Activated naive CD4-positive, alpha-beta T cell treated with anti-CD3 and anti-CD28 coated beads for 36 hours (primary cell): ENCODE measurements at regions of chr10 and their contacts with region 1.

Region 1: GRCh38 chr10:8130973-8131911 is 76.8 kb downstream of the GATA3 start:
- DNase-seq: peak; percentile 61
- H3K4me3 Mint-ChIP-seq: no peak overlapping the region
- H3K27ac Mint-ChIP-seq: no peak overlapping the region
- H3K4me1 Mint-ChIP-seq: peaks cover 31% of the 10 kb centered on the region
- H3K27me3 Mint-ChIP-seq: peaks cover 6% of the 10 kb centered on the region

Region 2: GRCh38 chr10:8059959-8060703 is 71.1 kb before region 1 on chr10:
- CTCF ChIA-PET with region 1: no interaction called
- intact Hi-C with region 1: loop called (anchors 1 kb)
- DNase-seq: peak; percentile 75
- H3K4me3 Mint-ChIP-seq: peak overlapping the region; percentile 54
- H3K27ac Mint-ChIP-seq: peak overlapping the region; percentile 62
- H3K4me1 Mint-ChIP-seq: peaks cover 81% of the 10 kb centered on the region
- H3K27me3 Mint-ChIP-seq: no peaks in the 10 kb centered on the region

Region 3: GRCh38 chr10:8245131-8245813 is 114.0 kb after region 1 on chr10:
- CTCF ChIA-PET with region 1: no interaction called
- intact Hi-C with region 1: loop called (anchors 2 kb)
- DNase-seq: peak; percentile 30
- H3K4me3 Mint-ChIP-seq: no peak overlapping the region
- H3K27ac Mint-ChIP-seq: peak overlapping the region; percentile 37
- H3K4me1 Mint-ChIP-seq: peaks cover 38% of the 10 kb centered on the region
- H3K27me3 Mint-ChIP-seq: no peaks in the 10 kb centered on the region

Region 4: DNA sequence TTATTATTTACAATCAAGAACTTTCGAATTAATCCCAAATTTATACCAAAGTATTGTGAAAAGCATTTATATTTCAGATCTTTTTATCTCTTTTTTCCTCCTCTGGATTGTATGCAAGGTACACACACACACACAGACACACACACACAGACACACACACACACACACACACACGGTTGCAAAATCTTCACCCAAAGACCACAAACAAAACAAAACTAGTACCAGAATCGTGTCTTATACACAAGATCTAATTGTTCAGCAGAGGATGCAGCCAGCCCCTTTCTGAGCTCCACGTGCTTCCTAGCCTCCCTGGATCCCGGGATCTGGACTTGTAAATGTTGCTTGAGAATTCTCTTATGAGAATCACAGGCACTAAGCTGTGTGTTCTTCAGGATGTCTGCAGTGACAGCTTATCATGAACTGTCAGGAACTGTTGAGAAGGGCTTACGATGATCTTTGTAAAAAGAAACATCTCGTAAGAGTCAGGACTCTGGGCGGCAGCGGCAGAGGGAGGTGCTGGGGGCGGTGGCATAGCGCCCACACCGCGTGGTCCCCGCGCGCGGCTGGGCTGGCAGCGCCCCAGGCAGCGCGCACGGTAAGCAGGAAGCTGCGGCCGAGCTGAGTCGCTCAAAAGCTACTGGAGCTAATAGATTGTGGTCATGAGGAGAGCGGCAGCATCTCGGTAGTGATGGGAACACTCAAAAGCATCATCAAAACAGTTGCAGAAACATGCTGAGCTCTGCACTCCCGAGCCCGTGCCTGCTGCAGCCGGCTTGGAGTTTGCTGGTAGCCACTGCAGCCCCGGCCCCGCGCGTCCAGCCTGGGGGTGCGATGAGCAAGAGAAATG is 200.9 kb after region 1 on chr10:
- CTCF ChIA-PET with region 1: no interaction called
- intact Hi-C with region 1: loop called (anchors 5 kb)
- DNase-seq: peak; percentile 80
- H3K4me3 Mint-ChIP-seq: peak overlapping the region; percentile 75
- H3K27ac Mint-ChIP-seq: no peak overlapping the region
- H3K4me1 Mint-ChIP-seq: peaks cover 20% of the 10 kb centered on the region
- H3K27me3 Mint-ChIP-seq: peaks cover 13% of the 10 kb centered on the region

Region 5: GRCh38 chr10:9175200-9175599 is 1044.0 kb after region 1 on chr10:
- CTCF ChIA-PET with region 1: no interaction called
- intact Hi-C with region 1: loop called (anchors 10 kb)
- DNase-seq: no peak
- H3K4me3 Mint-ChIP-seq: no peak overlapping the region
- H3K27ac Mint-ChIP-seq: no peak overlapping the region
- H3K4me1 Mint-ChIP-seq: peaks cover 13% of the 10 kb centered on the region
- H3K27me3 Mint-ChIP-seq: peaks cover 4% of the 10 kb centered on the region